ENCODE measurements at regions of chr22 and their contacts with region 1.

Region 1: GRCh38 chr22:42743501-42743991 is 22.9 kb upstream of the A4GALT start:
- DNase-seq: peak in 1 of 2 experiments; percentile 77
- H3K4me3 ChIP-seq: no peak overlapping the region
- H3K27ac ChIP-seq: no peak overlapping the region
- H3K4me1 ChIP-seq: peaks cover 54% of the 10 kb centered on the region
- H3K27me3 ChIP-seq: no peaks in the 10 kb centered on the region
- CTCF ChIP-seq: no peak

Region 2: DNA sequence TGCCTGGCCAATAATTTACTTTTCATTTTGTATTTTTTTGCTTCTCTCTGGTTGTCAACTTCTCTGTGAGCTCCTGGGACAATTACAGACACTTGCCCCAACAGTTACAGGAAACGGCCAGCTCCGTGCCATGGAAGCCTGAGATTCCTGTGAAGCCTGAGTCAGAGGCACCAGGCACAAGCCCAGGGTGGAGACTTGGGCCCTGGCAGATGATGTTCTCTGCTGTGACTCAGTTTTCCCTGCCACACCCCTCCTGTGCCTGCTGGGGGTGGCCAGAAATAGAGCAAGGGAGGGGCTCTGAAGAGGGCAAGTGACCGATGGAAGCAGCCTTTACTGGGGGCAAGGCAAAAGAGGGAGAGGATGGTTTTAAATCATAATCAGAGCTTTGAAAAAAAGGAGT is 108.0 kb before region 1 on chr22:
- CTCF ChIA-PET with region 1: no interaction called
- POLR2A ChIA-PET with region 1: interaction called, 10 read pairs
- intact Hi-C with region 1: no loop called
- DNase-seq: peak; percentile 82 to 85
- H3K4me3 ChIP-seq: no peak overlapping the region
- H3K27ac ChIP-seq: peak overlapping the region; percentile 90
- H3K4me1 ChIP-seq: peaks cover 19% of the 10 kb centered on the region
- H3K27me3 ChIP-seq: no peaks in the 10 kb centered on the region
- CTCF ChIP-seq: no peak

Region 3: DNA sequence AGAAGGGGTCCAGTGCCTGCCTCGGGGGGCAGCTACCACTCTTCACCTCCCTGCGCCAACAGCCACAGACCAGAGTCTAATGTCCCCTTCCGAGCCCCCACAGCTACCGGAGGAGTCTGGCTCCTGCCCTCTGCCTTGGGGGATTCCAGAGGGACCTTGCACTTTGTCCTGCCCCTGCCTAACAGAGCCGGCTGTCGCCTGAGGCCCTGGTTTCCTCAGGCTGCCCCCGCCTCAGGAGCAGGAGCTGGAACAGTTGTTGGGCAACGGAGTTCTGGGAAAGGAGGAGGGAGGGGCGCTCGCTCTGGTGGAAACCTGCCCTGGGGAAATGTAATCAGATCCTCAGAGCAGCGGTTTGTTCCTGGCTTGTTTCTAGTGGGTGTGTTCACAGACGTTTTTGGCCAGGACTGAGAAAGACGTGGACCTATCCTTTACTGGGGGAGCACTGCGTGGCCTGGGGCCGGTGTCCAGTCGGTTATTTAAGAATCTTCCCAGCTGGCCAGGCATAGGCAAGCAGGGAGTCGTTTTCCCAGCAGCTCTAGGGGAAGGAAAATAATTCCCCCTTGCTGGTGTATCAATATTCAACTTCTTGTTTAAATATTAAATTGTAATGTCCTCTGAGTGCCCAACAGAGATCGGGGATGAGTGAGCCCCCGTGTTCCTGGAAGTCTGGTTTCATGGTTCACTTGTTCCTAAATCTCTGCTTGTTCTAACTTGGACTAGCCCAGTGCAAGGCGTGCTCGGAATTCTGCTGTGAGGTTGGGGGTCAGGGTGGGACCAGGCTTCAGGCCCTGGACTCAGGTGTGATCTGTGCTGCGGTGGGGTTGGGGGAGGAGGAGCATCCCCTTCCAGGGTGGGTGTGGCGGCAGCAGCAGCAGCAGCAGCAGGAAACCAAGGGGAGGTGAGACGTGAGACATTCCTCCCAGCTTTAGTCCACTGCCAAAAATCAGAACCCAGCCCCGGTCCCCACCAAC is 55.0 kb before region 1 on chr22:
- CTCF ChIA-PET with region 1: no interaction called
- POLR2A ChIA-PET with region 1: no interaction called
- intact Hi-C with region 1: loop called (anchors 5 kb)
- DNase-seq: peak; percentile 83 to 89
- H3K4me3 ChIP-seq: peak overlapping the region; percentile 23; the same call in 1 of the 2 replicates
- H3K27ac ChIP-seq: peak overlapping the region; percentile 70
- H3K4me1 ChIP-seq: peaks cover 41% of the 10 kb centered on the region
- H3K27me3 ChIP-seq: no peaks in the 10 kb centered on the region
- CTCF ChIP-seq: no peak